ENCODE measurements at regions of chr12 and their contacts with region 1.

Region 1: DNA sequence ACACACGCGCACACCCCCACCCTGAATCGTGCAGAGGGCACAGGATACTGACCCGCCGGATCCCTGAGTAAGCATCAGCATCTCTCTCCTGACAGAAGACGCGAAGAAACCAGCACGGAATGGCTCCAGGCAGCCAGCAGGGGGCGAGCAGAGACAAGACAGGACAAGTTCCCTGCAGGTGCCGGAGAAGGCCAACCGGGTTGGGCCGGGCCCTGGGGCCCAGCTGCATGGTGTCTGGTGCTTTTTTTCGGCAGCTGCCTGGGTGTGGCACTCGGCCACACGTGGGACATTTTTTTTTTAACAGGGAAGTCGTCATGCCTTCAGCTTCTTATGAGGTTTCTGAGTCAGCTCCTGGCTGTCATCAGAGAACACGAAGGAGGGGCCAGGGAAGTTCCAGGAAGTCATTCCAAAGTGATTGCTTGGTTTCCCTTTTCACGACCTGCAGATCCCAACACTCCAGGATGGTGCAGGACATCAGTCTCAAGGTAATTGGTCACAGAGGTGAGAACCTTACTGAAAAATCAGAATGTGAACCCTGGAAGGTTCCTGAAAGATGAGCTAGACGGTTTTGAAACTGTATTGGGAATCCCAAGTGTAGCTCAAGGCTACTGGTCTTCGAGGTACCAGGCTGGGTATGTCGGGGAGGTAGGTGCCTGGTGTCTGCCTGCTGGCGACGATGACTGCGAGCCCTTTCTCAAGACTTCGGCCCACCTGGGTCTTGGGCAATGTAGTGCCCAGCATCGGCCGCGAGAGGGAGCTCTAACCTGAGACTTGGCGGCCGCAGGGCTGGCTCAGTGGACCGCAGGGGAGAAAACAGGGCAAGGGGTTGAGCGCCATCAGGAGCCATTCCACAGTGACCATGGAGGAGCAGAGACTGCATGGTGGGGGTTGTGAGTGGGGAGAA is 190.8 kb upstream of the PRMT8 start:
- H3K4me3 Mint-ChIP-seq: peak overlapping the region; percentile 55
- H3K27ac Mint-ChIP-seq: no peak overlapping the region
- H3K4me1 Mint-ChIP-seq: peaks cover 8% of the 10 kb centered on the region
- H3K27me3 Mint-ChIP-seq: peaks cover 38% of the 10 kb centered on the region

Region 2: DNA sequence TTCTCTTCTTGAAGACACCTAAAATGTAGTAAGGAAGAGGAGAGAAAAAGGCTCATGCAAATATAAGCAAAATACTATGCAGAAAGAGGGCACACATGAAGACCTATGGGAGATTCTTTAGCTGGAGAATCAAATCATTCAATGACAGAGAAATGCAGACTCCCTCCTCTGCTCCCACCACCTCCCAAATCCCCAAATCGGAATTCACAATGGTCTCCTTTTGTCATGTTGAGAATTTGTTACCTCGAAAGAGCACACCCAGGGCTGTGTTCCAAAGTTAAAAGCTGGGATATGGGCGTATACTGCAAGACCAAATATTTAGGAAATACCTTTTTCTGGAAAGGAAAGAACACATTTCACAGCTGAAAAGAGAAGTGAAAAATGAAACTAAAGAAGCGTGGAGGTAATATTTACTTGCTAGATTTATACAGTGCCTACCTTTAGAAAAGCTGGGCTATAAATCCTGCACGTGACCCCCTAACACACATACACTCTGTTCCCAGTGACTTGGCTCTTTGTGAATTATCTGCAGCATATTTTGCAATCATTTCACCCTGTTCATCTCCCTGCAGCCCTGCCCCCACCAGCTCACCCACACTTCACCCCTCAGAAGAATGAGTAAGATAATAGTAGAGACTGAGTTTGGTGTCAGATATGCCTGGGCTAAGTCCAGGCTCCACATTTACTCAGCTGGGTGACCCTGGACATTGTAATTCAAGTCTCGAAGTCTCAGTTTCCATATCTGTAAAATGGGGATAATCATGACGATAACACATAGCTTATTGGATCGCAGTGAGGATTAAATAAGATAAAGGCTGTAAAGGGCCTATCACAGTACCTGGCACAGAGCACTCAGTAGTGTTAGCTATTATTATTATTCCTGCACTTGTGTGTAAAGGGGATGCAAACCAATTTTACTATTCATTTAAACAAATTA is 1250.3 kb before region 1 on chr12:
- intact Hi-C with region 1: no loop called
- H3K4me3 Mint-ChIP-seq: no peak overlapping the region
- H3K27ac Mint-ChIP-seq: no peak overlapping the region
- H3K4me1 Mint-ChIP-seq: peaks cover 9% of the 10 kb centered on the region
- H3K27me3 Mint-ChIP-seq: peaks cover 42% of the 10 kb centered on the region

Region 3: DNA sequence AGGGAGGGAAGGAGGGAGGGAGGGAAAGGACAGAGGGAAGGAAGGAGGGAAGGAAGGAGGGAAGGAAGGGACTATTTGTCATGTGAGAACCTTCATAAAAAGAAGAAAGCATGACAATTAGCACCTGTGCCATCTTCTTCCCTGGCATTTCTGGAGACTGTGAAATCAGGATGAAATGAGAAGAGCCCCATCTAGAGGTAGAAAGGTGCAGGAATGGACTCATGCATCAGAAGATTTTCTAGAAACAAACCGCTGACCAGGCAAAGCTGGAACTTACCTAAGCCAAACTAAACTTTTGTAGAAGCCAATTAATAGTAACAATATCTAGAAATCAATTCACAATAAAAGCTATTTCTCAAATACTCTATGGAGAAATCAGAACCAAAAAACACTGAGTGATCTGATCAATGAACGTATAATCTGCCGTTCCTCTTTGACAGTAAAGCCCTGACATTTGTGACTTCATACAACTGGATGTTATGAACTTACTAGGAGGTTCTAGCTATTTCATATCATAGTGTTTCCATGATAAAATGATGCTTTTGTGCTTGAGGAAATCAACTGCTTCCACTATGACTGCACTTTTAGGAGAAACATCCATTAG is 477.1 kb after region 1 on chr12:
- intact Hi-C with region 1: loop called (anchors 1 kb)
- H3K4me3 Mint-ChIP-seq: no peak overlapping the region
- H3K27ac Mint-ChIP-seq: no peak overlapping the region
- H3K4me1 Mint-ChIP-seq: no peaks in the 10 kb centered on the region
- H3K27me3 Mint-ChIP-seq: peaks cover 5% of the 10 kb centered on the region

Region 4: DNA sequence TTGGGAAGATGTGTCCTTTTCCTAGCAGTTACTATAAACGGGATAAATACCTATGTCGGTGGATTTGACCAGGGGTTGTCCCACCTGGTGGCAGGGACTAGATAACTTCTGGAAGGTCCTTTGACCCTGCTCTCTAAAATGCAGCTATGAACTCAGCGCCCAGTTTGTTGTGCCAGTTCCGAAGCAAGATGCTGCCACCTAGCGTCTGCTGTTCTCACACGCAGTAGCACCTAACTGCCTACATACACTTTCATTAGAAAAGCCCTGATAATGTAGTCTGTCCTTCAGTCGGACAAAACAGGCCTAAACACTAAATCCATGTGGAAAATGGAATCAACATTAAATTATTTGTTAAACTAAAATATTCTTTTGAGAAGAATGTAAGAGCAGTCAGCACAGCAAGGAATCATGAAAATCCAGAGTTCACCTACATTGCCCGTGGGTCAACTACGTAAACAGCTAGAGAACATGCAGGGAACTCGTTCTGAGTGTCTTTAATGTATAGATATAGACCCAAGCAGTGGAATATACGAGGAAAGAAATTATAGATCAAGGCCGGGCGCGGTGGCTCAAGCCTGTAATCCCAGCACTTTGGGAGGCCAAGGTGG is 503.8 kb after region 1 on chr12:
- intact Hi-C with region 1: loop called (anchors 1 kb)
- H3K4me3 Mint-ChIP-seq: no peak overlapping the region
- H3K27ac Mint-ChIP-seq: no peak overlapping the region
- H3K4me1 Mint-ChIP-seq: no peaks in the 10 kb centered on the region
- H3K27me3 Mint-ChIP-seq: no peaks in the 10 kb centered on the region

Measured in dendritic cell treated with granulocyte-macrophage colony-stimulating factor and Interleukin-4, amounts not matched to agents 40 ng/mL and 50 ng/mL, for 4 days (primary cell).